ENCODE measurements at regions of chr14 and their contacts with region 1.

Region 1: GRCh38 chr14:26765768-26766520 is 168.1 kb upstream of the NOVA1 start:
- DNase-seq: no peak
- ATAC-seq: no peak
- H3K4me3 ChIP-seq: no peak overlapping the region
- H3K4me3 Mint-ChIP-seq: no peak overlapping the region
- H3K27ac ChIP-seq: no peak overlapping the region
- H3K27ac Mint-ChIP-seq: no peak overlapping the region
- H3K4me1 ChIP-seq: no peaks in the 10 kb centered on the region
- H3K4me1 Mint-ChIP-seq: no peaks in the 10 kb centered on the region
- H3K27me3 ChIP-seq: no peaks in the 10 kb centered on the region
- H3K27me3 Mint-ChIP-seq: no peaks in the 10 kb centered on the region
- CTCF ChIP-seq: no peak

Region 2: DNA sequence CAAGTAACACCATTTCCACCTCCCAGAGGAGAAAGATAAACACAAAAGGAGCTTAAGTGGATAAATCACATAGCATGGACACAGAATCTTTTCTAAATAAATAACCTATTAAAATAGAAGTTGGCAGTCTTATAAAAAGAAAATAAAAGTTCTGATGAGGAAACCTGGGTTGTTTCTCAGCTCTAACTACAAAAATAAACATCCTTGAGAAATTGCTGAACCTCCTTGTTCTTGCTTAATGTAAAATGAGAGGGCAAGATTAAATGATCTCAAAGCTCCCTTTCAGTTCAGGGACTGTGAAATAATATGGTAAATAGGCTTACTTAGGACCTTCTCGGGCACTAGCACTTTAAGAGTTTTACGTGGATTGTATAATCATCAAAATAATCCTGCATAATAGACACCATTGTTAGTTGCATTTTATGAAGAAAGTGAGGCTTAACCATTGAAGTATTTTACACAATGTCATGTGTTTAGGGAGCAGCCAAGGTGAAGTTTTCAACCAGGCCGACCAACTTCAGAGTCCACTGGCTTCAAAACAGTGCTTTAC is 45.9 kb after region 1 on chr14:
- CTCF ChIA-PET with region 1: no interaction called
- POLR2A ChIA-PET with region 1: no interaction called
- intact Hi-C with region 1: loop called in 1 of 2 experiments (anchors 1 kb)
- DNase-seq: no peak
- ATAC-seq: no peak
- H3K4me3 ChIP-seq: no peak overlapping the region
- H3K4me3 Mint-ChIP-seq: no peak overlapping the region
- H3K27ac ChIP-seq: no peak overlapping the region
- H3K27ac Mint-ChIP-seq: no peak overlapping the region
- H3K4me1 ChIP-seq: no peaks in the 10 kb centered on the region
- H3K4me1 Mint-ChIP-seq: no peaks in the 10 kb centered on the region
- H3K27me3 ChIP-seq: no peaks in the 10 kb centered on the region
- H3K27me3 Mint-ChIP-seq: no peaks in the 10 kb centered on the region
- CTCF ChIP-seq: no peak